Right ventricle myocardium inferior (tissue), 1 donor: ENCODE measurements at regions of chr14 and their contacts with region 1.

Region 1: DNA sequence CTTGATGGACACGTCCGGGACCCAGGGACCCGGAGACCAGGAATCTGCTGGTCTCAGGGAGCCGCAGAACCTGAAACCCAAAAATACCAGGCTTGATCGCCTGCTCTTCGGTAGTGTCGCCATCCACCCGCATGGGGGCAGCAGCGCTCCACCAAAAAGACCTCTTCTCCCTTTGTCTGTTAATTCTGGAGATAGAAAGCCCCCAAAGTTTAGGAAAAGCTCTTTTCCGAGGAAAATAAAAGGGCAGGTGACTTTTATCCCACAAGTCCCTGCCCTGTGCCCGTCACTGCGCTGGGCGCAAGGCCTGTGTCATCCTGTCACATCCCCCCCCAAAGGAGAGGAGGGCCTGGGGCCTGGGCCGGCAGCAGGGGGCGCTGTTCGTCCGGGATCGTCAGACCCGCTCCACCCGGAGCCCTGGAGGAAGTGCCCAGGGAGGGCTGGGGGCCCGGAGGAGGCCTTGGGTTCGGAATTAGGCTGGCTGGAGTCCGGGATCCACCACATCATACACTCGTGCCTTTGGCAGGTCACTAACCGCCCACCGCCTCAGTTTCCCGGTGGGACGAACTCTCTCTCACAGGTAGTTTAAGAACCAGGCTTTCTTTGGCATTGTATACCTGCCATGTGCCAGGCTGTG is 31.9 kb downstream of the DAD1 start:
- DNase-seq: peak; percentile 84
- ATAC-seq: peak; percentile 88

Region 2: DNA sequence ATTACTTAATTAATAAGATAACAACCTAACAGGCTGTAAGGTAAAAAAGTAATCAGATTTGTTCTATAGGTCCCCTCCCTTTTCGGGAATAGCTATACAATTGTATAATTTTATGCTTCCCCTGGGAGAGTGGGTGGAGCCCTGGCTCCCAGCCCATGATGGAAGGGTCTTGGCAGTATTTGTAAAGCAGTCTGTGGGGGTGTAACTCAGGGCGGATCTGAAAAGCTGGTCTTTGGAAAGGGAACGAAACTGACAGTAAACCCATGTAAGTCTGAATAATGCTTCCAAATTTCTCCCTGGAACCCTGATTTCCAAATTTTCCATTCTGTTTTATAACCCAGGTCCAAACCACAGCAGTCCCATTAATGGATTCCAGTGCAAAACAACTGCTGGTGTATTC is 78.4 kb before region 1 on chr14:
- intact Hi-C with region 1: loop called (anchors 5 kb)
- DNase-seq: no peak
- ATAC-seq: no peak

Region 3: GRCh38 chr14:22589096-22589839 is 32.2 kb after region 1 on chr14 and contains the start of gene DAD1:
- intact Hi-C with region 1: no loop called
- DNase-seq: peak; percentile 99
- ATAC-seq: peak; percentile 100
- total RNA-seq, gene DAD1: 143 TPM

Region 4: GRCh38 chr14:22715186-22715812 is 158.2 kb after region 1 on chr14:
- intact Hi-C with region 1: loop called (anchors 10 kb)
- DNase-seq: no peak
- ATAC-seq: no peak

Region 5: GRCh38 chr14:22737052-22737451 is 179.9 kb after region 1 on chr14:
- intact Hi-C with region 1: no loop called
- DNase-seq: no peak
- ATAC-seq: no peak